CD8-positive, alpha-beta T cell (primary cell): ENCODE measurements at regions of chr11 and their contacts with region 1.

Region 1: DNA sequence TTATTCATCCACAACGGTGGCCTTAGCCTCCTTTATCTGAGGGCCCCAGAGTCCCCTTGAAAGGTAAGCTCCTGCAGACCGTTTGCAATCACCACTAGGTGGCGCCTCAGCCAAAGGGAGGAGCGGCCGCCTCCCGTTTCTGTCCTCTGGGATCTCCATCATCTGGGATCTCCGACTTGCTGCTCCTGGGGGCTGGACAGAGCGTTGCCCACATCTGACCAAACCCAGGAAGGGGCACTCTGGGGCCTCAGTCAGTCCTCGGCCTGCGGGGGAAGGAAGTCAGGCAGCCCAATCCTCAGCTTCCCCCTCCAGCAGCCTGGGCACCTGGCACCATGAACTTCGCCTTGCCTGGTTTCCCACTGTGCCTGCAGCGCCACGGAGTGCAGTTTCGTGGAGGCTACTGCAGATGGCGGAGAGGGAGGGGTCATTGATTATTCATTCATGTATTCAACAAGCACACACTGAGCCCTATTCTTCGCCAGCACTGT is 23.5 kb downstream of the TP53I11 start:
- DNase-seq: peak; percentile 24 to 77 (median 59)
- ATAC-seq: peak; percentile 52
- H3K4me3 ChIP-seq: no peak overlapping the region
- H3K4me3 Mint-ChIP-seq: no peak overlapping the region
- H3K27ac ChIP-seq: no peak overlapping the region
- H3K27ac Mint-ChIP-seq: no peak overlapping the region
- H3K4me1 ChIP-seq: no peaks in the 10 kb centered on the region
- H3K4me1 Mint-ChIP-seq: no peaks in the 10 kb centered on the region
- H3K27me3 ChIP-seq: peaks cover 0 to 2% of the 10 kb centered on the region in 2 experiments
- H3K27me3 Mint-ChIP-seq: no peaks in the 10 kb centered on the region
- CTCF ChIP-seq: peak; percentile 79

Region 2: GRCh38 chr11:44916801-44917385 is 10.3 kb before region 1 on chr11:
- CTCF ChIA-PET with region 1: interaction called, 22 read pairs
- POLR2A ChIA-PET with region 1: no interaction called
- intact Hi-C with region 1: no loop called
- DNase-seq: no peak
- ATAC-seq: no peak
- H3K4me3 ChIP-seq: no peak overlapping the region
- H3K4me3 Mint-ChIP-seq: no peak overlapping the region
- H3K27ac ChIP-seq: no peak overlapping the region
- H3K27ac Mint-ChIP-seq: no peak overlapping the region
- H3K4me1 ChIP-seq: no peaks in the 10 kb centered on the region
- H3K4me1 Mint-ChIP-seq: no peaks in the 10 kb centered on the region
- H3K27me3 ChIP-seq: no peaks in the 10 kb centered on the region
- H3K27me3 Mint-ChIP-seq: no peaks in the 10 kb centered on the region
- CTCF ChIP-seq: no peak

Region 3: GRCh38 chr11:44950625-44951476 is 23.6 kb after region 1 on chr11 and contains the start of gene TP53I11:
- CTCF ChIA-PET with region 1: interaction called, 14 read pairs
- POLR2A ChIA-PET with region 1: no interaction called
- intact Hi-C with region 1: no loop called
- DNase-seq: peak; percentile 31 to 82 (median 52)
- ATAC-seq: peak; percentile 79
- H3K4me3 ChIP-seq: peak within 1 kb of the TSS; percentile 56 to 73
- H3K4me3 Mint-ChIP-seq: peak within 1 kb of the TSS; percentile 86
- H3K27ac ChIP-seq: no peak within 1 kb of the TSS
- H3K27ac Mint-ChIP-seq: no peak within 1 kb of the TSS
- H3K4me1 ChIP-seq: no peaks in the 10 kb centered on the region
- H3K4me1 Mint-ChIP-seq: peaks cover 7% of the 10 kb centered on the region
- H3K27me3 ChIP-seq: no peaks in the 10 kb centered on the region
- H3K27me3 Mint-ChIP-seq: no peaks in the 10 kb centered on the region
- CTCF ChIP-seq: peak; percentile 47
- total RNA-seq, gene TP53I11: 4.8 to 6.8 TPM

Region 4: GRCh38 chr11:44957776-44958564 is 30.8 kb after region 1 on chr11:
- CTCF ChIA-PET with region 1: interaction called, 10 read pairs
- POLR2A ChIA-PET with region 1: no interaction called
- intact Hi-C with region 1: no loop called
- DNase-seq: no peak
- ATAC-seq: no peak
- H3K4me3 ChIP-seq: no peak overlapping the region
- H3K4me3 Mint-ChIP-seq: no peak overlapping the region
- H3K27ac ChIP-seq: no peak overlapping the region
- H3K27ac Mint-ChIP-seq: no peak overlapping the region
- H3K4me1 ChIP-seq: no peaks in the 10 kb centered on the region
- H3K4me1 Mint-ChIP-seq: no peaks in the 10 kb centered on the region
- H3K27me3 ChIP-seq: no peaks in the 10 kb centered on the region
- H3K27me3 Mint-ChIP-seq: no peaks in the 10 kb centered on the region
- CTCF ChIP-seq: no peak

Region 5: DNA sequence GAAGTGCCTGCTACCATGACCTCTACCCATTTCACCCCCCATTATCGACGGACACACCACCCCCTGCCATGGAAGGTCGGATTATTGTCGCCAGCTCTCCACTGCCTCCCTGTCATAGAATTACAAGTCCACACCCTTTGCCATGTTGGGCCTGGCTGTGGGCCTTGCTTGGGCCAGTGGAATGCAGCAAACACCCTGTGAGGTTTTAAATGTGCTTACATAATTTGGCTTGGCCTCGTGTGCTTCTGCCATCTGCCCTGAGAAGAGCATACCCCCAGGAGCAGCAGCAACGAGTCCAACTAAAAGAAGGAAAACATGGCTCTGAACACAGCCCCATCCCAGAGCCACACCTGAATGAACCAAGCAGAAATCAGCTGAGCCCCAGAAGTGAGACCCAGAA is 125.1 kb after region 1 on chr11:
- CTCF ChIA-PET with region 1: no interaction called
- POLR2A ChIA-PET with region 1: no interaction called
- intact Hi-C with region 1: no loop called
- DNase-seq: no peak
- ATAC-seq: no peak
- H3K4me3 ChIP-seq: no peak overlapping the region
- H3K4me3 Mint-ChIP-seq: no peak overlapping the region
- H3K27ac ChIP-seq: no peak overlapping the region
- H3K27ac Mint-ChIP-seq: no peak overlapping the region
- H3K4me1 ChIP-seq: no peaks in the 10 kb centered on the region
- H3K4me1 Mint-ChIP-seq: no peaks in the 10 kb centered on the region
- H3K27me3 ChIP-seq: no peaks in the 10 kb centered on the region
- H3K27me3 Mint-ChIP-seq: peaks cover 6% of the 10 kb centered on the region
- CTCF ChIP-seq: no peak

Region 6: DNA sequence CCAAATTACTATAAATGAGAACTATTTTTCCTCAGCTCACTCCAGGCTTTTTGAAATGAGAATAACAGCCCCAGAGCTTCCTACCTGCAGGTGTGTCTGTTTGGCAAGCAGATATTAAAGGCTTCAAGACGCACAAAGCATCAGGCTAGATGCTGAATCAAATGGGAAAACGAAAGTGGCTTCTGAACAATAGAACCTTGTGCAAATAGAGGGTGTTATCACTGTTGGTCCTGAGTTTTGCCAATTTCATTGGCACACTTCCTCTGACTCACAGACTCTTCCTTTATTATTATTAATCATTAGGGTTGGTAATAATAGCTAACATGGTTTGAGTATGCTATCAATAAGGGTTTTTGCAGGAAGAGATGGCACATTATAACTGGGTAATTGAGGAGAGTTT is 345.5 kb after region 1 on chr11:
- CTCF ChIA-PET with region 1: no interaction called
- POLR2A ChIA-PET with region 1: no interaction called
- intact Hi-C with region 1: no loop called
- DNase-seq: no peak
- ATAC-seq: no peak
- H3K4me3 ChIP-seq: no peak overlapping the region
- H3K4me3 Mint-ChIP-seq: no peak overlapping the region
- H3K27ac ChIP-seq: no peak overlapping the region
- H3K27ac Mint-ChIP-seq: no peak overlapping the region
- H3K4me1 ChIP-seq: no peaks in the 10 kb centered on the region
- H3K4me1 Mint-ChIP-seq: no peaks in the 10 kb centered on the region
- H3K27me3 ChIP-seq: peaks cover 0 to 2% of the 10 kb centered on the region in 2 experiments
- H3K27me3 Mint-ChIP-seq: peaks cover 39% of the 10 kb centered on the region
- CTCF ChIP-seq: no peak